ENCODE measurements at regions of chr3 and their contacts with region 1.

Region 1: GRCh38 chr3:125683067-125683829 is 88.0 kb upstream of the OSBPL11 start:
- DNase-seq: no peak
- ATAC-seq: no peak
- H3K4me3 ChIP-seq: no peak overlapping the region
- H3K4me3 Mint-ChIP-seq: no peak overlapping the region
- H3K27ac ChIP-seq: no peak overlapping the region
- H3K27ac Mint-ChIP-seq: no peak overlapping the region
- H3K4me1 ChIP-seq: no peaks in the 10 kb centered on the region
- H3K4me1 Mint-ChIP-seq: no peaks in the 10 kb centered on the region
- H3K27me3 ChIP-seq: peaks cover 0 to 22% of the 10 kb centered on the region in 2 experiments
- H3K27me3 Mint-ChIP-seq: peaks cover 13 to 17% of the 10 kb centered on the region in 2 donors

Region 2: DNA sequence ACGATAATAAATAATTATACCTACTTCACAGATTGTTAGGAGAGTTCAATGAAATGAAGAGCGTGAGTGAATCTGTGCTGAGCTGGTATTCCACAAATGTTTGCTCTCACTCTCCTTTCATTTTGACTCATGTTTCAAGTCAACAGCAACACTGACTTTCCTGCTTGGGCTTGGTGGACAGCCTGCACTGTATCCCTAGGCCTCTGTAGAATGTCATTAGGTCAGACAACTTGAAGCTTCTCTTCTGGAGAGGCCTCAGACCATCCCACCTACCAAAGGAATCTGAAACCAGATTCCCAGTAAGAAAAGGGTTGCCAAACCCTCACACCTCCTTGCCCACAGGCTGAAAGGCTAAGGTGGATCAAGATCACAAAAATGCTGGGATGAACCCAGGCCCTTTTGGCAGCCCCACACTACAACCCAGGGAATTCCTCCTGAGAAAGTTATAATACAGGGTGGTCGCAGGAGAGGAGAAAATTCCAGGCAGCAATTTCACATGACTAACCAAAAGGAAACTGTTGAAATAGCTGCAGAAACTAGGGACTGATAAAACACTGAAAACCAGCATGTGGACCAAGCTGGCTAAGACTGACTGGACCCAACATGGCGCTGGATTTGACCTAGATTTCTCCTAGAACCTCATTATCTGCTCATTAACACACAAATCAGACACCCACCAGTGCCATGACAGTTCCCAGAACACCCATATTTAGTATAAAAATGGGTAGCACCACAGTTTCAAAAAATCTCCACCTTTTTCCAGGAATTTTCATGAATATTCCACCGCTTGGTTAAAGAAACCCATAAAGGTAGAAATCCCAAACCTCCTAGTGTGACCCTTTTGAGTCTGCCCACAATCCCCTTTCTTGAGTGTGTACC is 251.1 kb before region 1 on chr3:
- CTCF ChIA-PET with region 1: no interaction called
- POLR2A ChIA-PET with region 1: interaction called in 1 of 2 experiments, 14 read pairs
- DNase-seq: no peak
- ATAC-seq: no peak
- H3K4me3 ChIP-seq: no peak overlapping the region
- H3K4me3 Mint-ChIP-seq: no peak overlapping the region
- H3K27ac ChIP-seq: no peak overlapping the region
- H3K27ac Mint-ChIP-seq: no peak overlapping the region
- H3K4me1 ChIP-seq: no peaks in the 10 kb centered on the region
- H3K4me1 Mint-ChIP-seq: no peaks in the 10 kb centered on the region
- H3K27me3 ChIP-seq: peaks cover 0 to 4% of the 10 kb centered on the region in 2 experiments
- H3K27me3 Mint-ChIP-seq: no peaks in the 10 kb centered on the region

Region 3: GRCh38 chr3:127247292-127247691 is 1564.0 kb after region 1 on chr3:
- CTCF ChIA-PET with region 1: no interaction called
- POLR2A ChIA-PET with region 1: no interaction called
- DNase-seq: no peak
- ATAC-seq: no peak
- H3K4me3 ChIP-seq: no peak overlapping the region
- H3K4me3 Mint-ChIP-seq: no peak overlapping the region
- H3K27ac ChIP-seq: no peak overlapping the region
- H3K27ac Mint-ChIP-seq: no peak overlapping the region
- H3K4me1 ChIP-seq: no peaks in the 10 kb centered on the region
- H3K4me1 Mint-ChIP-seq: no peaks in the 10 kb centered on the region
- H3K27me3 ChIP-seq: no peaks in the 10 kb centered on the region
- H3K27me3 Mint-ChIP-seq: no peaks in the 10 kb centered on the region